IMR-90 (cell line): ENCODE measurements at regions of chr5 and their contacts with region 1.

Region 1: DNA sequence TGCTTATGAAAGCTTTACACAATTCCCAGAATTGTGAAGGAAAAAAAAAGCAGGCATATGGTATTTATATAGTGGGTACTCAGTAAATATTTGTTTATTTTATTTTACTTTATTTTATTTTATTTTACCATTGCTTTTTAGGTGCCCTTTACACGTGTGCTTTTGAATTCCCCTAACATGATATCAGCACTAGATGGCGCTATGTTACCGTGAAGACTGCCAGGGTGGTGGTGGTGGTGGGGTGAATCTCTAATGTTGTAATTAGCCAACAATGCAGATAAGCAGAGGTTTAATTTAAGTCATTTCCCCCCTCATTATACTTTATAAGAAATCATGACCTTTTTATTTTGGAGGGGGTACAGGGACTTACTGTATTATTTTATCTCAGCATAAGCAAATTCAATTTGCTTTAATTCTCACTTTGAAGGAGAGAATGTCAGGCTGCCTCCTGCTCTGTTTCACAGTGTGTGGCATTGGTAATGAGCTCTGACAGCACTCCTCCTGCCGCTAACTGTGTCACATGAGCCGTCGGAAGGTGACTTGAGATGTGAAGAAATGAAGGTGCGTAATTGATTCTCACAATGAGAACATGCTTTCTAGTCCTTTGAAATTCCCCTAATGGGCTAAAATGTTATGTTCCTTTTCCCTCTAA is 165.6 kb downstream of the YTHDC2 start:
- DNase-seq: peak; percentile 36
- ATAC-seq: peak; percentile 84
- H3K4me3 ChIP-seq: no peak overlapping the region
- H3K27ac ChIP-seq: no peak overlapping the region
- H3K4me1 ChIP-seq: no peaks in the 10 kb centered on the region
- H3K27me3 ChIP-seq: no peaks in the 10 kb centered on the region; the same call in 1 of the 2 replicates
- CTCF ChIP-seq: peak; percentile 84
- POLR2A ChIP-seq: no peak
- RAD21 ChIP-seq: peak; percentile 85

Region 2: GRCh38 chr5:112635771-112636731 is 1043.0 kb before region 1 on chr5:
- CTCF ChIA-PET with region 1: no interaction called
- POLR2A ChIA-PET with region 1: no interaction called
- dilution Hi-C with region 1: no loop called
- in situ Hi-C with region 1: no loop called
- intact Hi-C with region 1: no loop called
- DNase-seq: no peak
- ATAC-seq: no peak
- H3K4me3 ChIP-seq: no peak overlapping the region
- H3K27ac ChIP-seq: no peak overlapping the region
- H3K4me1 ChIP-seq: no peaks in the 10 kb centered on the region
- H3K27me3 ChIP-seq: peaks cover under 1% of the 10 kb centered on the region; the same call in 1 of the 2 replicates
- CTCF ChIP-seq: no peak
- POLR2A ChIP-seq: no peak
- RAD21 ChIP-seq: no peak

Region 3: DNA sequence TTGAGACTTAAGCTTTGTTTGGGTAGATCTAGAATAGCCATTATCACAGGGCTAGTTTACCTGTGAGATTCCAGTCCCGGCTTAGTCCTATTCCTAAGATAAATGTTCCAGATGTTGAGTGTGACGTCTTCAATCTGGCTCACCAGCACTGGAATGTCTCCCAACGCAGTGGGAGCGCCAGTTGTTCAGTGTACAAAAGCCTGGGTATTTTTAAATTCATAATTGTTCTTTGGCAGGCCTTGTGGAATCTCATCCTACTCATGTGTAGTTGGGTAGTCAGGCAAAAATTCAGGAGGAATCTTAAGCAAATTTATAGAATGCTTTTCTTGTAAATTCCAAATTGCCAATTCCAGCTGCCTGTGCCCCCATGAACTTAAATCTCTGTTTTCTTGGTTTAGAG is 410.2 kb after region 1 on chr5:
- CTCF ChIA-PET with region 1: no interaction called
- POLR2A ChIA-PET with region 1: no interaction called
- dilution Hi-C with region 1: no loop called
- in situ Hi-C with region 1: no loop called
- intact Hi-C with region 1: loop called (anchors 10 kb)
- DNase-seq: no peak
- ATAC-seq: no peak
- H3K4me3 ChIP-seq: no peak overlapping the region
- H3K27ac ChIP-seq: no peak overlapping the region
- H3K4me1 ChIP-seq: no peaks in the 10 kb centered on the region
- H3K27me3 ChIP-seq: no peaks in the 10 kb centered on the region
- CTCF ChIP-seq: no peak
- POLR2A ChIP-seq: no peak
- RAD21 ChIP-seq: no peak

Region 4: GRCh38 chr5:115246361-115246991 is 1567.4 kb after region 1 on chr5:
- CTCF ChIA-PET with region 1: no interaction called
- POLR2A ChIA-PET with region 1: no interaction called
- dilution Hi-C with region 1: no loop called
- in situ Hi-C with region 1: no loop called
- intact Hi-C with region 1: loop called (anchors 10 kb)
- DNase-seq: peak; percentile 48
- ATAC-seq: peak; percentile 83
- H3K4me3 ChIP-seq: no peak overlapping the region
- H3K27ac ChIP-seq: no peak overlapping the region
- H3K4me1 ChIP-seq: peaks cover 6% of the 10 kb centered on the region
- H3K27me3 ChIP-seq: no peaks in the 10 kb centered on the region
- CTCF ChIP-seq: peak; percentile 83
- POLR2A ChIP-seq: no peak
- RAD21 ChIP-seq: peak; percentile 77